A549 (cell line): ENCODE measurements at regions of chr1 and their contacts with region 1.

Region 1: DNA sequence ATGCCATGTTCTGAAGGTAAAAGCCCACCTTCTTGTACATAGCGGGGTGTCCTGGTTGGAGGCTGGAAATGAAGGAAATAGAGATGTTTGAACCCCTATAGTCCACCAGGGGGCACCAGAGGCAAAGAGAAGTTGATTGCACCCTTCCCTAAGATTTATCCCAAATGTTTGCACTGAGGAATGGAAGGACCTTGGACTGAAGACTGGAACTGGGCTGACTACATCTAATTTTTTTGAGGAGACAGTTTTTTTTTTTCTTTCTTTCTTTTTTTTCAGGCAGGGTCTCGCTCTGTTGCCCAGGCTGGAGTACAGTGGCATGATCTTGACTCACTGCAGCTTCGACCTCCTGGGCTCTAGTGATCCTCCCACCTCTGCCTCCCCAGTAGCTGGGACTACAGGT is 55.3 kb upstream of the EIF4G3 start:
- DNase-seq: peak; percentile 35 to 63
- ATAC-seq: peak; percentile 84 to 88
- H3K4me3 ChIP-seq: no peak overlapping the region
- H3K27ac ChIP-seq: no peak overlapping the region
- H3K4me1 ChIP-seq: 0 out of 3 replicates have a peak, but pooled peaks cover 3% of the 10 kb centered on the region
- CTCF ChIP-seq: peak; percentile 75
- EP300 ChIP-seq: no peak
- POLR2A ChIP-seq: no peak
- RAD21 ChIP-seq: peak; percentile 80 to 85

Region 2: DNA sequence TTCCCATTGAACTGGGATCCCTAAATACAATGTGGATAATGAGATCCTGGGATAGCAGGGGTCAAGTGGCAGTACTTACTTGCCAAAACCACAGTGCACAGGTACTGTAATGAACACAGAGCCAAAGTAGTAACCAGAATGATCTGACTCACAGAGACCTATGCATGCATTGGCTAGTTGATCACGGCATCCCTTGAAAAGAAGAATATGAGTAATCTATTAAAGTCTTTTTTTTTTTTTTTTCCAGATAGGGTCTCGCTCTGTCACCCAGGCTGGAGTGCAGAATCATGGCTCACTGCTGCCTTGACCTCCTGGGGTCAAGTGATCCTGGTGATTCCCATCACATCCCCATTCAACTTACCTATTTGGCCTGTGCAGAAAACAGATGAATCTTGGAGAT is 25.9 kb before region 1 on chr1:
- CTCF ChIA-PET with region 1: no interaction called
- POLR2A ChIA-PET with region 1: no interaction called
- DNase-seq: no peak
- ATAC-seq: no peak
- H3K4me3 ChIP-seq: no peak overlapping the region
- H3K27ac ChIP-seq: no peak overlapping the region
- H3K4me1 ChIP-seq: no peaks in the 10 kb centered on the region
- CTCF ChIP-seq: no peak
- EP300 ChIP-seq: no peak
- POLR2A ChIP-seq: no peak
- RAD21 ChIP-seq: no peak

Region 3: GRCh38 chr1:21216835-21217811 is 14.9 kb before region 1 on chr1:
- CTCF ChIA-PET with region 1: interaction called, 29 read pairs
- POLR2A ChIA-PET with region 1: no interaction called
- DNase-seq: peak; percentile 14 to 60
- ATAC-seq: peak; percentile 57 to 71; a peak in 4 of 6 replicates
- H3K4me3 ChIP-seq: no peak overlapping the region
- H3K27ac ChIP-seq: no peak overlapping the region
- H3K4me1 ChIP-seq: peaks cover 2% of the 10 kb centered on the region; the same call in 2 of the 3 replicates
- CTCF ChIP-seq: peak; percentile 61
- EP300 ChIP-seq: no peak
- POLR2A ChIP-seq: no peak
- RAD21 ChIP-seq: peak; percentile 44 to 63; a peak in 3 of 5 replicates

Region 4: GRCh38 chr1:21244986-21245687 is 13.1 kb after region 1 on chr1:
- CTCF ChIA-PET with region 1: interaction called, 60 read pairs
- POLR2A ChIA-PET with region 1: no interaction called
- DNase-seq: no peak
- ATAC-seq: peak in 1 of 2 experiments; percentile 70; a peak in 3 of 6 replicates
- H3K4me3 ChIP-seq: no peak overlapping the region
- H3K27ac ChIP-seq: no peak overlapping the region
- H3K4me1 ChIP-seq: peaks cover 6% of the 10 kb centered on the region; the same call in 1 of the 3 replicates
- CTCF ChIP-seq: peak; percentile 30; the same call in 1 of the 3 replicates
- EP300 ChIP-seq: no peak
- POLR2A ChIP-seq: no peak
- RAD21 ChIP-seq: no peak

Region 5: GRCh38 chr1:21270086-21270689 is 38.1 kb after region 1 on chr1:
- CTCF ChIA-PET with region 1: interaction called, 25 read pairs
- POLR2A ChIA-PET with region 1: no interaction called
- DNase-seq: peak; percentile 74 to 75
- ATAC-seq: peak; percentile 65 to 78; a peak in 5 of 6 replicates
- H3K4me3 ChIP-seq: no peak overlapping the region
- H3K27ac ChIP-seq: peak overlapping the region; percentile 95; a peak in 5 of 6 replicates
- H3K4me1 ChIP-seq: peaks cover 55% of the 10 kb centered on the region
- CTCF ChIP-seq: peak; percentile 72
- EP300 ChIP-seq: no peak
- POLR2A ChIP-seq: no peak
- RAD21 ChIP-seq: peak; percentile 35 to 57; a peak in 3 of 5 replicates

Region 6: GRCh38 chr1:21302747-21303715 is 71.0 kb after region 1 on chr1:
- CTCF ChIA-PET with region 1: interaction called, 14 read pairs
- POLR2A ChIA-PET with region 1: interaction called, 3 read pairs
- DNase-seq: no peak
- ATAC-seq: peak; percentile 71 to 72; a peak in 5 of 6 replicates
- H3K4me3 ChIP-seq: no peak overlapping the region
- H3K27ac ChIP-seq: peak overlapping the region; percentile 53 to 72; a peak in 5 of 6 replicates
- H3K4me1 ChIP-seq: peaks cover 23% of the 10 kb centered on the region
- CTCF ChIP-seq: peak; percentile 29; the same call in 2 of the 3 replicates
- EP300 ChIP-seq: no peak
- POLR2A ChIP-seq: no peak
- RAD21 ChIP-seq: peak; percentile 46 to 60; a peak in 4 of 5 replicates

Region 7: DNA sequence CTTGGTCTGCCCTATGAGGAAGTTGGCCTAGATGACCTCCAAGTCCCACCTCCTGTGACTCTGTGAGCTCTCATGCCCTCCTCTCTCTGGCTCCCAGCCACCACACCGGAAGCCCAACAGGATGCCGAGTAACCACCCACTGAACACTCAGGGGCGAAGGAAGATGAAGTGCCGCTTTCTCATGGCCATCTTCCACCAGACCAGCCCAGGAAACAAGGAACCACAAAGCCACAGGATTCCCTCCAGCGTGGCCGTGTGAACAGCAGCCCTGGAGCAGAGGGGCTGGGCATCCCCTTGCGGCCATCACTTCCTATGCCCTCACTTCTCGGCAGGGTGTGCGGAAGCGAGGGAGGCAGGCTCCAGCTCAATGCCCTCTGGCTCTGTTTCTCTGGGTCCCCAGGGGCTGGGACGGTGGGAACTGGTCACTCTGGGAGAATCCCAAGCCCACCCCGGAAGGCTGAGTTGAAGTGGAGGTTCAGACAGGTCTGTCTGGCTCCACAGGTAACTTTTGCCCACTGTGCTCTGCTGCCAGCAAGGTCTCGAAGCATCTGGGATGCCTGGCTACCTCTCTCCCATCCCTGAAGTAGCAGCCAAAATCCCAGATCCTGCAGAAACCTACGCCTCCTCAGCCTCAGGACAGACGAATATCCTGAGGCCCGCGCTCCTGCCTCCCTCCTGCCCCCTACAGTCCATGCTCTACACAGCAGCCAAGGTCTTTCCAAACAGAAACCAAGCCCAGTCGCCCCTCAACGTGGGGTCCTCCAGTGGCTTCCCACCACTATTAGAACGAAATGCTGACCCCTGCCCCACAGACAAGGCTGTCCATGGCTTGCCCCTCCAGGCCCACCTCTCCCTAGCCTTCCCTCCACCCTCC is 102.4 kb after region 1 on chr1:
- CTCF ChIA-PET with region 1: interaction called, 10 read pairs
- POLR2A ChIA-PET with region 1: no interaction called
- DNase-seq: peak; percentile 41 to 65
- ATAC-seq: peak; percentile 81 to 84
- H3K4me3 ChIP-seq: 0 out of 3 replicates have a peak overlapping the region, but pooled peaks have one; percentile 9
- H3K27ac ChIP-seq: peak overlapping the region; percentile 89 to 90
- H3K4me1 ChIP-seq: peaks cover 93% of the 10 kb centered on the region
- CTCF ChIP-seq: peak; percentile 60
- EP300 ChIP-seq: no peak
- POLR2A ChIP-seq: no peak
- RAD21 ChIP-seq: peak; percentile 68

Region 8: DNA sequence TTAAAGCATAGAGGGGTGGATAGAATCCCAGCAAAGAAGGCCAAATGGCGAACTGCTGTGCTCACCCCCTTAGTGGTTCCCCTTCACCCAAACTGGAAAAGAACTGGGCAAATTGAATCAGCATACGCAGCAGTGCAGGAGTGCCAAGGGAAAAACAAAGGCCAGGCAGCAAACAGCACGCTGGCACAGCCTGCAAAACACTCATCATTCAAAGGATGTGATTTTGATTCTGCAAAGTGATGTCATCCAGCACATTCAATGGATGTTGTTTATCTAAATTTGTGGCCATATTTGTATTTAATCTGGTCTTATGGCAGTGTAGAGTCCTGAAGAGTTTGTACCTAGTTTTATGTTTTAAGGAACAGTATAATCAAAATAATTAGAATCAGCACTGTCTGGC is 130.1 kb after region 1 on chr1:
- CTCF ChIA-PET with region 1: interaction called, 34 read pairs
- POLR2A ChIA-PET with region 1: no interaction called
- DNase-seq: no peak
- ATAC-seq: no peak
- H3K4me3 ChIP-seq: no peak overlapping the region
- H3K27ac ChIP-seq: no peak overlapping the region; a peak in 1 of 6 replicates
- H3K4me1 ChIP-seq: no peaks in the 10 kb centered on the region
- CTCF ChIP-seq: no peak
- EP300 ChIP-seq: no peak
- POLR2A ChIP-seq: no peak
- RAD21 ChIP-seq: no peak

Region 9: GRCh38 chr1:21451212-21451812 is 219.3 kb after region 1 on chr1:
- CTCF ChIA-PET with region 1: no interaction called
- POLR2A ChIA-PET with region 1: no interaction called
- DNase-seq: no peak
- ATAC-seq: no peak
- H3K4me3 ChIP-seq: no peak overlapping the region
- H3K27ac ChIP-seq: no peak overlapping the region
- H3K4me1 ChIP-seq: peaks cover 9% of the 10 kb centered on the region; the same call in 2 of the 3 replicates
- CTCF ChIP-seq: no peak
- EP300 ChIP-seq: no peak
- POLR2A ChIP-seq: no peak
- RAD21 ChIP-seq: no peak